ENCODE measurements at regions of chr7 and their contacts with region 1.

Region 1: DNA sequence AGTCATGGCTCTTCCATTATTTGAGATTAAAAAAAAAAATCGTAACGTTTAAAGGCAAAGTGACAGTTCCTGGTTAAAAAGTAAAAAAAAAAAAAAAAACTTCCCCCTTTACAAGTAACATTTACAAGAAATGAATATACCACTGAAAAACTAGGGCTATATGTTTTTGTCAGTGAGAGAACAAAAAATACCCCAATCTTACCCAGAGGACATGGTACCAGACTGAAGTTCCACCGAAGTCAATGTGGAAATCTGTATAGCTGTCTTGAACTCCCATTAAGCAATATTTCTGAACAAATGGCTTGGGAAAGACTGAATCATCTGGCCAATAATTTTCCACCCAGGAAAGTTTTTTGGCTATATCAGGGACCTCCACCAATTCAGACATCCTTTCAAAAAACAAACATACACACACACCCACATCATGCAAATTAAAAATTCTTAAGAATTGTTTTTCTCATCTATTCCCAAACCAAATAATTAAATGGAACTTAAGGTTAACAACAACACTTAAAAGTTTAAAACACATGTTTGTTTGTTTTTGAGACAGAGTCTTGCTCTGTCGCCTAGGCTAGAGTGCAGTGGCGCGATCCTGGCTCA is 50.2 kb downstream of the KDM7A start:
- DNase-seq: no peak
- ATAC-seq: no peak
- H3K4me3 ChIP-seq: no peak overlapping the region
- H3K4me3 Mint-ChIP-seq: no peak overlapping the region
- H3K27ac ChIP-seq: no peak overlapping the region
- H3K27ac Mint-ChIP-seq: peak overlapping the region in 1 of 2 donors; percentile 4
- H3K4me1 ChIP-seq: no peaks in the 10 kb centered on the region
- H3K4me1 Mint-ChIP-seq: peaks cover 0 to 6% (median 3%) of the 10 kb centered on the region in 3 donors
- H3K27me3 ChIP-seq: no peaks in the 10 kb centered on the region
- H3K27me3 Mint-ChIP-seq: no peaks in the 10 kb centered on the region

Region 2: DNA sequence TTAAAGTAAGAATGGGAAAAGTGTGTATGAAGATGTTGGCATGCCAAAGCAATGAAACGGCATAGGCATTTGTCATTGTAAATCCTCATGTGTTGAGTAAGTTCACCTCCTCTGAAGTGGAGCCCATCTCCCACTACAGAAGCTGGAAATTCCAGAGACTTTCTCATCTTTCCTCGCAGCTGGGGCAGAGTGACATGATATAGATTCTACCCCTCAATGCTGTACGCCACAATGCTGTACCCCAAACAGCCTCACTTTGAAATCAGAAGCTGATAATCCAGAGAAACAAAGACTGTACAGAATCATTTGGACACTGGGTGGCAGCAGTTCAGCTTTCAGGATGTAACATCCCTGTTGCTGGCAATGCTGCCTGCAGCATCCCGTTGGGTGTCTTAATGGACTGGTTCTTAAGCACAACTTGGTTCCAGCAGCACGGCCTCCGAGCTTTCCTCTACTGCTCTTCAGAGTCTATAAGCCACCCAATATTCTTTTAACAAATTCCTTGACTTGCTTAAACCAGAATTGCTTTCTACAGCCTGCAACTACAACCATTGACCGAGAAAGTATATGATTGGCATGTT is 1109.5 kb before region 1 on chr7:
- CTCF ChIA-PET with region 1: no interaction called
- POLR2A ChIA-PET with region 1: no interaction called
- DNase-seq: peak; percentile 15 to 80 (median 55)
- ATAC-seq: peak; percentile 81 to 98 (median 88)
- H3K4me3 ChIP-seq: no peak overlapping the region
- H3K4me3 Mint-ChIP-seq: no peak overlapping the region
- H3K27ac ChIP-seq: no peak overlapping the region
- H3K27ac Mint-ChIP-seq: no peak overlapping the region
- H3K4me1 ChIP-seq: no peaks in the 10 kb centered on the region
- H3K4me1 Mint-ChIP-seq: peaks cover 6 to 17% (median 9%) of the 10 kb centered on the region in 3 donors
- H3K27me3 ChIP-seq: peaks cover 0 to 6% of the 10 kb centered on the region in 2 experiments
- H3K27me3 Mint-ChIP-seq: peaks cover 0 to 9% of the 10 kb centered on the region in 2 donors

Region 3: GRCh38 chr7:140144821-140145220 is 18.3 kb after region 1 on chr7:
- CTCF ChIA-PET with region 1: interaction called in 1 of 2 experiments, 3 read pairs
- POLR2A ChIA-PET with region 1: interaction called in 1 of 2 experiments, 11 read pairs
- DNase-seq: no peak
- ATAC-seq: no peak
- H3K4me3 ChIP-seq: no peak overlapping the region
- H3K4me3 Mint-ChIP-seq: no peak overlapping the region
- H3K27ac ChIP-seq: no peak overlapping the region
- H3K27ac Mint-ChIP-seq: no peak overlapping the region
- H3K4me1 ChIP-seq: peaks cover 4 to 6% of the 10 kb centered on the region in 2 experiments
- H3K4me1 Mint-ChIP-seq: peaks cover 70 to 85% (median 74%) of the 10 kb centered on the region in 3 donors
- H3K27me3 ChIP-seq: no peaks in the 10 kb centered on the region
- H3K27me3 Mint-ChIP-seq: no peaks in the 10 kb centered on the region

Region 4: GRCh38 chr7:140564643-140565042 is 438.1 kb after region 1 on chr7:
- CTCF ChIA-PET with region 1: no interaction called
- POLR2A ChIA-PET with region 1: no interaction called
- DNase-seq: no peak
- ATAC-seq: no peak
- H3K4me3 ChIP-seq: no peak overlapping the region
- H3K4me3 Mint-ChIP-seq: no peak overlapping the region
- H3K27ac ChIP-seq: no peak overlapping the region
- H3K27ac Mint-ChIP-seq: no peak overlapping the region
- H3K4me1 ChIP-seq: no peaks in the 10 kb centered on the region
- H3K4me1 Mint-ChIP-seq: no peaks in the 10 kb centered on the region
- H3K27me3 ChIP-seq: peaks cover 0 to 4% of the 10 kb centered on the region in 2 experiments
- H3K27me3 Mint-ChIP-seq: peaks cover 0 to 3% of the 10 kb centered on the region in 2 donors